GM10248 (cell line): ENCODE measurements at regions of chr2 and their contacts with region 1.

Region 1: GRCh38 chr2:138787053-138787666 is 7.0 kb upstream of the NXPH2 start:
- DNase-seq: no peak
- CTCF ChIP-seq: peak; percentile 68

Region 2: DNA sequence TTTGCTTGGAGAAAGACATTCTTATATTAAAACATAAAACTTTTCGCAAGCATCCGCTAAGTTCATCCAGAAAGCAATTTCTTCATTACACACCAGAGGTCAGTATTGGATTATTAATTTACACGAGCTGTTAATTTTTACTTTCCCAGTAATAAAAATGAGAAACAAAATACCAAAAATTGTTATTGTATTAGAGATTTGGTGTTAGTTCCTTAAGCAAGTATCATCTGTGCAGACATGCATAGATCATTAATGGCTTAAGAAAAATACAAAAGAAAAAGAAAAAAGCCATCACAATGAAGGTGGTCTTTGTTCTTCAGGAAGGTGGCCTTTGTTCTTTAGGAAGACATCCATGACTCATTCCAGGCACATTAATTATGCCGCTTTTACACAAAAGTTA is 876.5 kb before region 1 on chr2:
- CTCF ChIA-PET with region 1: interaction called, 21 read pairs
- POLR2A ChIA-PET with region 1: no interaction called
- DNase-seq: no peak
- CTCF ChIP-seq: peak; percentile 36

Region 3: DNA sequence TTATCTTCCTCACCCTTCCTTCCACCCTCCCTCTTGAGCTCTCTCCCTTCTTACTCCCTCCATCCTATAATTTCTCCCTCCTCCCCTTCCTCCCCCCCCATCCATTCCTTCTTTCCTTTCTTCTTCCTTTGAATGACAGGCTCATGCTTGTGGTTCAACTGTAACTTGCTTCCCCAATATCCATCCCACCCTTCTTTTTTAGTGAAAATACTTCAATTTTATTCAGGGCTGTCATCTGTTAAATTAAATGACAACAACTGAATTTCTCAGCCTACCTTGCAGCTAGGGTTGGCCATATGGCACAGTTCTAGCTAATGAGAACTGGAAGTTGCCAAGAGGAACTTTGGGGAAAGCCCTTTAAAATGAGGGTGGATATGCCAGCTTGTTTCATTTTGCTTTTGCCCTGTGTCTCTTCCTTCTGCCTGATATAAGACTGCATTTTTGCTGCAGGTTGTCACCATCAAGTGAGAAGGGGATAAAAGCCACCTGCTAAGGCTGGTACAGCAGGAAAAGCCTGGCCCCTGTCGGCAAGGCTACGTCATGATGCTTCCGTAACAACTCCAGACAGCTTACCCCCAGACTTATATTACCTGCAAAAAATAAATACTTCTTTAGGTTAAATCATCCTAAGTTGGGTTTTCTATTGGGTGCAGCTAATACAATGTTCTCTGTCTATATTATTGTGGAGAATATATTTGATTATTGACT is 128.8 kb before region 1 on chr2:
- CTCF ChIA-PET with region 1: no interaction called
- POLR2A ChIA-PET with region 1: no interaction called
- DNase-seq: no peak
- CTCF ChIP-seq: no peak

Region 4: DNA sequence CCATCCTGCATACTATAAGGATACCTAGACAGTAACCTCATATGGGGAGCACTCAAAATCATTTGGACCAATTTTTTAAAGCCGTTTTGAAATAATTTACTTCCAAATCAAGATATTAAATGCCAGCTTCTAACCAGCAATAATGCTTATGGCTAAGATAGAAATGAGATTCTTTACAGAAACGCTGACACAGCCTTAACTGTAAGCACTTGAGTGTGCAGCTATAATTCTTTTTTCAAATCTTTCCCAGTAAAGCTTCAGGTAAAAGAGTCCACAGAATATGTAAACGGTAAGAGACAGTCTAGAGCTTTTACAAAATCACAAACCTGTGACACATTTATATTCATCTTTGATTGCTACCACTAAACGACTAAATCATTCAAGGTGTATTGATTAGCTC is 11.4 kb before region 1 on chr2:
- CTCF ChIA-PET with region 1: interaction called, 12 read pairs
- POLR2A ChIA-PET with region 1: no interaction called
- DNase-seq: no peak
- CTCF ChIP-seq: no peak